Activated CD4-positive, alpha-beta T cell treated with anti-CD3 and anti-CD28 coated beads for 36 hours (primary cell): ENCODE measurements at regions of chr20 and their contacts with region 1.

Region 1: DNA sequence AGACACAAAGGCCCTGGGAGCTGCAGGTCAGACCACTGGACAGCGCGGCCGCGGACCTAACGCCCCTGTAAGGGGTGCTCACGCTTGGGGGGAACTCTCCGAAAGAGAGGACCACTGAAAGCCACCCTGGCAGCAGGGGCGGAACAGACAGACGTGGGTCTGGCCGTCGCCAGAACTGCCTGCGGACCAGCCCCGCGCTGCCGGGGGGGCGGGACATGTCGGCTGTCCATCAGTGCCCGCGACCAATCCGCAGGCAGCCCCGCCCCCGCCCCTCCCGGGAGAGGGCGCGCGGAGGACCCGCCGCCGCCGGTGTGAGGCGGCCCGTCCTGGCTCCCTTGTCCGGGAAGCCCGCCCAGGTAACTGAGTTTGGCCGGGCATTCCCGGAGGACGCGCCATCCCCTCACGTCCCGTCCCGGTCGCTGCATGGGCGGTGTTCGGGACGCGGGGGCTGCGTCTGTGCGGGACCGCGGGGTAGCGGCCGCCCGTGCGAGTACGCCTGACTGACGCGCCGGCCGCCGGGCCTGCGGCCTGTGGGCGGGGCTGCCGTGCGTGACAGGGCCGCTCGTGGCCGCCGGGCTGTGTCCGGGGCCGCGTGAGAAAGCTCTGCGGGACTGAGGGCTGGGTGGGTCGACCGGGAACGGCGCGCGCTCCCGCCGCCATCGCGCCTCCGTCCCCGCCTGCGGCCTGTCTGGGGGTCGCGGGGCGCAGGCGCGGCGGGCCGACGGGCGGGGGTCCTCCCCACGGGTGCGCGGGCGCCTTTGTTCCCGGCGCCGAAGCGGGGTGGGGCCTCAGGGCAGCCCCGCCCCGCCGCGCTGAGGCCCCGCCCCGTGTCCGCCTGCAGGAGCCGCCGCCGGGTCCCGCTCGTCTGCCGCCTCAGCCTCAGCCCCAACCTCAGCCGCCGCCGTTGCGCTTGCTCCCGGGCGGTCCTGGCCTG is at the start of gene PLCG1:
- DNase-seq: peak; percentile 93
- ATAC-seq: peak; percentile 62
- H3K4me3 Mint-ChIP-seq: peak within 1 kb of the TSS; percentile 86
- H3K27ac Mint-ChIP-seq: peak within 1 kb of the TSS; percentile 92
- H3K4me1 Mint-ChIP-seq: peaks cover 65% of the 10 kb centered on the region
- H3K27me3 Mint-ChIP-seq: no peaks in the 10 kb centered on the region
- total RNA-seq, gene PLCG1: 185 to 230 TPM

Region 2: GRCh38 chr20:41028348-41029148 is 108.4 kb before region 1 on chr20 and contains the start of gene TOP1:
- CTCF ChIA-PET with region 1: no interaction called
- POLR2A ChIA-PET with region 1: interaction called, 3 read pairs
- intact Hi-C with region 1: loop called (anchors 1 to 5 kb)
- DNase-seq: peak; percentile 100
- ATAC-seq: peak; percentile 98
- H3K4me3 Mint-ChIP-seq: peak within 1 kb of the TSS; percentile 84
- H3K27ac Mint-ChIP-seq: peak within 1 kb of the TSS; percentile 92
- H3K4me1 Mint-ChIP-seq: peaks cover 45% of the 10 kb centered on the region
- H3K27me3 Mint-ChIP-seq: no peaks in the 10 kb centered on the region
- total RNA-seq, gene TOP1: 111 to 124 TPM

Region 3: DNA sequence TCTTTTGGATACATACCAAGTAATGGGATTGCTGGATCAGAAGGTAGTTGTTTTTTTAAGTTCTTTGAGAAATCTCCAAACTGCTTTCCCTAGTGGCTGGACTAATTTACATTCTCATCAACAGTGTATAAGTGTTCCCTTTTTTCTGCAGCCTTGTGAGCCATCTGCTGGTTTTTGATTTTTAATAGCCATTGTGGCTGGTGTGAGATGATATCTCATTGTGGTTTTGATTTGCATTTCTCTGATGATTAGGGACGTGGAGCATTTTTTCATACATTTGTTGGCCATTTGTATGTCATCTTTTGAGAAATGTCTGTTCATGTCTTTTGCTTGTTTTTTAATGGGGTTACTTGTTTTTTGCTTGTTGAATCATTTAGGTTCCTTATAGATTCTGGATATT is 73.5 kb before region 1 on chr20:
- CTCF ChIA-PET with region 1: no interaction called
- POLR2A ChIA-PET with region 1: no interaction called
- intact Hi-C with region 1: no loop called
- DNase-seq: no peak
- ATAC-seq: no peak
- H3K4me3 Mint-ChIP-seq: no peak overlapping the region
- H3K27ac Mint-ChIP-seq: peak overlapping the region; percentile 2
- H3K4me1 Mint-ChIP-seq: peaks cover 45% of the 10 kb centered on the region
- H3K27me3 Mint-ChIP-seq: no peaks in the 10 kb centered on the region

Region 4: GRCh38 chr20:41161886-41162285 is 24.9 kb after region 1 on chr20:
- CTCF ChIA-PET with region 1: interaction called, 30 read pairs
- POLR2A ChIA-PET with region 1: interaction called, 19 read pairs
- intact Hi-C with region 1: loop called (anchors 1 kb)
- DNase-seq: no peak
- ATAC-seq: no peak
- H3K4me3 Mint-ChIP-seq: no peak overlapping the region
- H3K27ac Mint-ChIP-seq: peak overlapping the region; percentile 72
- H3K4me1 Mint-ChIP-seq: peaks cover 59% of the 10 kb centered on the region
- H3K27me3 Mint-ChIP-seq: no peaks in the 10 kb centered on the region

Region 5: GRCh38 chr20:41232973-41233926 is 96.3 kb after region 1 on chr20:
- CTCF ChIA-PET with region 1: interaction called, 12 read pairs
- POLR2A ChIA-PET with region 1: no interaction called
- intact Hi-C with region 1: loop called (anchors 1 kb)
- DNase-seq: no peak
- ATAC-seq: no peak
- H3K4me3 Mint-ChIP-seq: no peak overlapping the region
- H3K27ac Mint-ChIP-seq: peak overlapping the region; percentile 1
- H3K4me1 Mint-ChIP-seq: peaks cover 18% of the 10 kb centered on the region
- H3K27me3 Mint-ChIP-seq: no peaks in the 10 kb centered on the region

Region 6: GRCh38 chr20:41249406-41250281 is 112.7 kb after region 1 on chr20:
- CTCF ChIA-PET with region 1: no interaction called
- POLR2A ChIA-PET with region 1: no interaction called
- intact Hi-C with region 1: no loop called
- DNase-seq: no peak
- ATAC-seq: no peak
- H3K4me3 Mint-ChIP-seq: no peak overlapping the region
- H3K27ac Mint-ChIP-seq: no peak overlapping the region
- H3K4me1 Mint-ChIP-seq: peaks cover 3% of the 10 kb centered on the region
- H3K27me3 Mint-ChIP-seq: no peaks in the 10 kb centered on the region

Region 7: GRCh38 chr20:41317536-41318270 is 180.8 kb after region 1 on chr20 and contains the start of gene ZHX3:
- CTCF ChIA-PET with region 1: interaction called, 7 read pairs
- POLR2A ChIA-PET with region 1: no interaction called
- intact Hi-C with region 1: loop called in 1 of 2 experiments (anchors 1 kb)
- DNase-seq: peak; percentile 98
- ATAC-seq: peak; percentile 99
- H3K4me3 Mint-ChIP-seq: peak within 1 kb of the TSS; percentile 84
- H3K27ac Mint-ChIP-seq: peak within 1 kb of the TSS; percentile 66
- H3K4me1 Mint-ChIP-seq: peaks cover 31% of the 10 kb centered on the region
- H3K27me3 Mint-ChIP-seq: no peaks in the 10 kb centered on the region
- total RNA-seq, gene ZHX3: 12.8 to 15.4 TPM

Region 8: GRCh38 chr20:41617931-41618806 is 481.2 kb after region 1 on chr20 and contains the start of gene CHD6:
- CTCF ChIA-PET with region 1: no interaction called
- POLR2A ChIA-PET with region 1: no interaction called
- intact Hi-C with region 1: loop called (anchors 1 to 10 kb)
- DNase-seq: peak; percentile 99
- ATAC-seq: peak; percentile 99
- H3K4me3 Mint-ChIP-seq: peak within 1 kb of the TSS; percentile 75
- H3K27ac Mint-ChIP-seq: peak within 1 kb of the TSS; percentile 75
- H3K4me1 Mint-ChIP-seq: peaks cover 42% of the 10 kb centered on the region
- H3K27me3 Mint-ChIP-seq: no peaks in the 10 kb centered on the region
- total RNA-seq, gene CHD6: 30.2 to 34.0 TPM